HCT116 (cell line): ENCODE measurements at regions of chr1 and their contacts with region 1.

Region 1: GRCh38 chr1:48498096-48498791 is 26.2 kb upstream of the SPATA6 start:
- DNase-seq: peak; percentile 36
- ATAC-seq: peak; percentile 95
- H3K4me3 ChIP-seq: no peak overlapping the region
- H3K27ac ChIP-seq: no peak overlapping the region
- H3K4me1 ChIP-seq: peaks cover 0 to 4% of the 10 kb centered on the region in 2 experiments; a peak in 2 of 4 replicates
- H3K27me3 ChIP-seq: peaks cover 4% of the 10 kb centered on the region
- CTCF ChIP-seq: peak; percentile 59 to 96 (median 84)
- POLR2A ChIP-seq: no peak
- RAD21 ChIP-seq: peak; percentile 62

Region 2: GRCh38 chr1:48109390-48110013 is 388.7 kb before region 1 on chr1:
- CTCF ChIA-PET with region 1: interaction called, 10 read pairs
- POLR2A ChIA-PET with region 1: no interaction called
- RAD21 ChIA-PET with region 1: no interaction called
- intact Hi-C with region 1: loop called (anchors 10 kb)
- DNase-seq: peak; percentile 24
- ATAC-seq: peak; percentile 89
- H3K4me3 ChIP-seq: no peak overlapping the region
- H3K27ac ChIP-seq: no peak overlapping the region
- H3K4me1 ChIP-seq: no peaks in the 10 kb centered on the region
- H3K27me3 ChIP-seq: peaks cover 26% of the 10 kb centered on the region
- CTCF ChIP-seq: peak; percentile 72 to 86 (median 85)
- POLR2A ChIP-seq: no peak
- RAD21 ChIP-seq: peak; percentile 81

Region 3: DNA sequence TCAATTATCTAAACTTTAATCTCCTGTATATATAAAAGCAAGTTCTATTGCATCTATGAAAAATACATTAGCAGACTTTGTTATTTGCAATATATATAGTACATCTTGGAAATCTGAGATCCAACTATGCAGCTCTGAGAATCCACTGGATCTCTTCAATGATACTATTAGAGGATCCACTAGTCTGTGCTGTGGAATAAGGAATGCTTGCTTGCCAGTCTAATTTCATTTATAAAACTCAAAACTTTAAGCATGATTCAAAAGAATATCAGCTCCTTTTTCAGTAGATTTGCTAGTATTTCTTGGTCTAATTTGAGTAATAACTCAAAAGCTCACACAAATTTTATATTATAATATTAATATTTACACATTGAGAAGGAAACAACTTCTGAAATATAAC is 141.3 kb before region 1 on chr1:
- CTCF ChIA-PET with region 1: interaction called, 12 read pairs
- POLR2A ChIA-PET with region 1: no interaction called
- RAD21 ChIA-PET with region 1: no interaction called
- intact Hi-C with region 1: no loop called
- DNase-seq: no peak
- ATAC-seq: no peak
- H3K4me3 ChIP-seq: no peak overlapping the region
- H3K27ac ChIP-seq: no peak overlapping the region
- H3K4me1 ChIP-seq: no peaks in the 10 kb centered on the region
- H3K27me3 ChIP-seq: no peaks in the 10 kb centered on the region
- CTCF ChIP-seq: no peak
- POLR2A ChIP-seq: no peak
- RAD21 ChIP-seq: 0 out of 2 replicates have a peak, but pooled peaks have one; percentile 3

Region 4: GRCh38 chr1:48471691-48472576 is 26.3 kb before region 1 on chr1 and contains the start of gene SPATA6:
- CTCF ChIA-PET with region 1: interaction called, 11 read pairs
- POLR2A ChIA-PET with region 1: interaction called, 4 read pairs
- RAD21 ChIA-PET with region 1: no interaction called
- intact Hi-C with region 1: no loop called
- DNase-seq: peak; percentile 85
- ATAC-seq: peak; percentile 94
- H3K4me3 ChIP-seq: peak within 1 kb of the TSS; percentile 67 to 73
- H3K27ac ChIP-seq: peak within 1 kb of the TSS; percentile 28; the same call in 1 of the 2 replicates
- H3K4me1 ChIP-seq: peaks cover 7 to 17% of the 10 kb centered on the region in 2 experiments; a peak in 2 of 4 replicates
- H3K27me3 ChIP-seq: no peaks in the 10 kb centered on the region
- CTCF ChIP-seq: no peak
- POLR2A ChIP-seq: peak; percentile 40
- RAD21 ChIP-seq: no peak
- total RNA-seq, gene SPATA6: 8.6 TPM

Region 5: DNA sequence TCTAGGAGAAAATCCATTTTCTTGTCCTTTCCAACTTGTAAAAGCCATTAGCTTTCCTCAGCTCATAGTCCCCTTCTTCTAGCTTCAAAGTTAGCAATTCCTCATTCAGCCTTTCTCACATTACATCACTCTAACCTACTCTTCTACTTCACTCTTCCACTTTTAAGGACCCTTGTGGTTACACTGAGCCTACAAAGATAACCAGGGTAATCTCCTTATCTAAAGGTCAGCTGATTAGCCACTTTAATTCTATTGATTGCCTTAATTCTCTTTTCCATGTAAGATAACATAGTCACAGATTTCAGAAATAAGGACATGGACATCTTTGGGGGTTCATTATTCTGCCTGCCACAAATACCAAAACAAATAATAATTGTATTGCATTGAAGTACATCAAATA is 17.7 kb before region 1 on chr1:
- CTCF ChIA-PET with region 1: interaction called, 12 read pairs
- POLR2A ChIA-PET with region 1: no interaction called
- RAD21 ChIA-PET with region 1: no interaction called
- intact Hi-C with region 1: no loop called
- DNase-seq: no peak
- ATAC-seq: no peak
- H3K4me3 ChIP-seq: no peak overlapping the region
- H3K27ac ChIP-seq: no peak overlapping the region
- H3K4me1 ChIP-seq: no peaks in the 10 kb centered on the region
- H3K27me3 ChIP-seq: peaks cover 13% of the 10 kb centered on the region
- CTCF ChIP-seq: no peak
- POLR2A ChIP-seq: no peak
- RAD21 ChIP-seq: no peak

Region 6: GRCh38 chr1:48530727-48531351 is 32.6 kb after region 1 on chr1:
- CTCF ChIA-PET with region 1: interaction called, 13 read pairs
- POLR2A ChIA-PET with region 1: no interaction called
- RAD21 ChIA-PET with region 1: no interaction called
- intact Hi-C with region 1: no loop called
- DNase-seq: peak; percentile 55
- ATAC-seq: peak; percentile 100
- H3K4me3 ChIP-seq: no peak overlapping the region
- H3K27ac ChIP-seq: no peak overlapping the region
- H3K4me1 ChIP-seq: no peaks in the 10 kb centered on the region
- H3K27me3 ChIP-seq: peaks cover 44% of the 10 kb centered on the region
- CTCF ChIP-seq: peak; percentile 61 to 94 (median 94); a peak in 5 of 6 replicates
- POLR2A ChIP-seq: no peak
- RAD21 ChIP-seq: peak; percentile 63

Region 7: DNA sequence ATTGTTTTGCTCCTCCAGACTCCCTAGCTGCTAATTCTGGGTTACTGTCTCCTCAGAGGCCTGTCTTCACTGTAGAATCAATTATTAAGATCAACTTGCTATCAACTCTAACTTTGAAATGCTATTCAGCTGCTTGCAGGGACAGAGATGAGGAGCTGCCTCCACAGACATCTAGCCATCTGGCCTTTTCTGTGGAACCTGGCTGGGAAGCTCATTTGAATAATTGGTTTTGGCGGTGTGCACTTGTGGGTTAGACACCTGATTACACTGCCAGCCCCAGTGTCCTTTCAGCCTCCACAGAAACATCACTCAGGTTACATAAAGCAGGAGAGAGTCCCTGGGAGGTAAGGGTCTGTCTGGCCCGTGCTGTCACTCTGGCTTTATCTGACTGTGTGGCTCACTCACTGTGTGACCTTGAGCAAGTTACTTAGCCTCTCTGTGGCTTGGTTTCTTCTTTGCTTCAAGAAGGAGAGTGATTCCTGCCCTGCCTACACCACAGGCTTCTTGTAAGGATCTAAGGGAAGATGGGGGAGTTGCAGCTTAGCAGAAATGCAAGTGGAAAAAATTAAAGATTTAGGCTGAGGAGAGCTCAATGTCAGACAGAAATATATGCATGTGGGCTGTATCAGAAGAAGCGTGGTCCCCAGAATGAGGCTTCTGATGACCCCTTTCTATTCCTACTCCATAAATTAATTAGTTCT is 146.8 kb after region 1 on chr1:
- CTCF ChIA-PET with region 1: no interaction called
- POLR2A ChIA-PET with region 1: no interaction called
- RAD21 ChIA-PET with region 1: no interaction called
- intact Hi-C with region 1: no loop called
- DNase-seq: no peak
- ATAC-seq: no peak
- H3K4me3 ChIP-seq: no peak overlapping the region
- H3K27ac ChIP-seq: no peak overlapping the region
- H3K4me1 ChIP-seq: no peaks in the 10 kb centered on the region
- H3K27me3 ChIP-seq: peaks cover 47% of the 10 kb centered on the region
- CTCF ChIP-seq: no peak
- POLR2A ChIP-seq: no peak
- RAD21 ChIP-seq: no peak

Region 8: DNA sequence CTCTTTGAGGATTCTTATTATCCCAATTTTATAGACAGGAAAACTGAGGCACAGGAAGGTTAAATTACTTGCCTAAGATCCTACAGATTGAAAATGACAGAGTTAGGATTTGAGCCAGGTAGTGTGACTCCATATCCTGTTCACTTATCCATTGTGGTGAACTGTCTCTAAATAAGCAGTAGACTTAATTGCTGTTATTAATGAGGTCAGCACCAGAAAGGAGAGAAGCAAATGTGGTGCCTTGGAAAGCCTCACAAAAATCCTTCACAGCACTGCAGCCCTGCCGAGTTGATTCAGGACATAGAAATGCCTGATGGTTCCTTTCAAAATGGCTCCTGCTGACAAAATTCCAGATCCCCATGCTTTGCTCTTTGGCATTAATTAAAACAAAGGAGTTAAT is 471.7 kb after region 1 on chr1:
- CTCF ChIA-PET with region 1: no interaction called
- POLR2A ChIA-PET with region 1: no interaction called
- RAD21 ChIA-PET with region 1: no interaction called
- intact Hi-C with region 1: no loop called
- DNase-seq: no peak
- ATAC-seq: no peak
- H3K4me3 ChIP-seq: no peak overlapping the region
- H3K27ac ChIP-seq: no peak overlapping the region
- H3K4me1 ChIP-seq: no peaks in the 10 kb centered on the region
- H3K27me3 ChIP-seq: no peaks in the 10 kb centered on the region
- CTCF ChIP-seq: no peak
- POLR2A ChIP-seq: no peak
- RAD21 ChIP-seq: no peak